Lower lobe of right lung (tissue), 2 donors: ENCODE measurements at regions of chr4 and their contacts with region 1.

Region 1: DNA sequence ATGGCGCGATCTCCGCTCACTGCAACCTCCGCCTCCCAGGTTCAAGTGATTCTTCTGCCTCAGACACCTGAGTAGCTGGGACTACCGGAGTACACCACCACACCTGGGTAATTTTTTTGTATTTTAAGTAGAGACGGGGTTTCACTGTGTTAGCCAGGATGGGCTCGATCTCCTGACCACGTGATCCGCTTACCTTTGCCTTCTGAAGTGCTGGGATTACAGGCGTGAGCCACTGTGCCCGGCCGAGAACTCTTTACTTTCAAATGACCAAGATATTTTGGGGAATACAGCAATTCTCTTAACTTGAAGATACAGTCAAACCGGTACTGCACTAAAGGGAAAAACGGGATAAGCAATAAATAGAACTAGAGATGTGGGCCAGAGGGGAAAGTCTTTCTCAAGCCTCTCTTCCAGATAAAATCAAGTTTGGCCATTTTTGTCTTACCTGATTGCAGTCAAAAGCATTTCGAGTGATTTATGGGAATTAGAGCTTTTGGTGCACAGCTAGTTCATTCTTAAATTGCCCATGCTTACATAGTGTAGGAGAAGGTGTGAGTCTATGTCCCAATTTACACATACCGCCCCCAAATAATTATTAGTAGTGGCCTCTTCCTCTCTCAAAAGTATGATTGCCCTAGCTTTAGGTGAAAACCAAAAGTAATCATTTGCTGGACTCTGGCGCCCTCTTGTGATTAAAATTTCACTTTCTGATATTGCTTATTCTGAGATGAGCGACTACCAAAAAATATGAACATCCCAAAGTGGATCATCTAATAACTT is 53.2 kb upstream of the ABCG2 start:
- DNase-seq: no peak
- ATAC-seq: peak; percentile 41 to 79
- H3K4me3 ChIP-seq: no peak overlapping the region
- H3K27ac ChIP-seq: no peak overlapping the region
- H3K4me1 ChIP-seq: no peaks in the 10 kb centered on the region
- H3K27me3 ChIP-seq: no peaks in the 10 kb centered on the region
- CTCF ChIP-seq: peak; percentile 67

Region 2: GRCh38 chr4:88033309-88033708 is 178.4 kb before region 1 on chr4:
- intact Hi-C with region 1: loop called (anchors 10 kb)
- DNase-seq: no peak
- ATAC-seq: peak; percentile 54 to 61
- H3K4me3 ChIP-seq: no peak overlapping the region
- H3K27ac ChIP-seq: no peak overlapping the region
- H3K4me1 ChIP-seq: no peaks in the 10 kb centered on the region
- H3K27me3 ChIP-seq: no peaks in the 10 kb centered on the region
- CTCF ChIP-seq: peak; percentile 66

Region 3: DNA sequence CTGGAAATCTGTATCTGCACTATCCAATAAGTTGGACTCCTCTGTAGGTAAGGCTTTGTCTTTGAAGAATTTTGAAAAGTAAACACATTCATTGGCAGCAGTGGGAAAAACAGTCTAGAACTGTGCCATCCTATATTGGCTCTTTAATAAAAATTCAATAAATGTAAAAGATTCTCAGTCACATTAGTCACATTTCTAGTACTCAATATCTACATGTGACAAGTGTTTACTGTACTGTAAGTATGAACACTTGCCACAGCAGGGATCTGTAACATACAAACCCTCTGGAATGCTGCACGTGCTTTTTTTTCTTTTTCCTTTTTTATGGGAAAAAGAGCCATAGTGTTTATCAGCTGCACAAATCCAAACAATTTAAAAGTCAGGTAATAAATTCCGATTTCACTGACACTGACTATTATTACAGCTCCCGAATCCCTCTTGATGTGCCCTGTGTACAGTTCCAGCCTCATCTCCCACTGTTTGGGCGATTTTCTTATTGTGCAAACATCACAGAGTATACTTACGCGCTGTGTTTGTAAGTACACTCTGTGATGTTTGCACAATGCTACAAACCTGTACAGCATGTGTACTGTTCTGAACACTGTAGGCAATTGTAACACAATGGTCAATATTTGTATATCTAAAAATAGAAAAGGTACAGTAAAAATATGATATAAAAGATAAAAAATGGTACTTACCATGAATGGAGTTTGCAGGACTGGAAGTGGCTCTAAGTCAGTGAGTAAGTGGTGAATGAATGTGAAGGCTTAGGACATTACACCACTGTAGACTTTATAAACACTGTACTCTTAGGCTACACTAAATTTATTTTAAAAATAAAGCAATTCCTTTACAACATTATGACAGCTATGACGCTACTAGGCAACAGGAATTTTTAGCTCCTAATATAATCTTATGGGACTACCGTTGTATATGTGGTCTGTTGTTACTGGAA is 303.2 kb after region 1 on chr4:
- intact Hi-C with region 1: loop called (anchors 10 kb)
- DNase-seq: no peak
- ATAC-seq: peak; percentile 95
- H3K4me3 ChIP-seq: no peak overlapping the region
- H3K27ac ChIP-seq: no peak overlapping the region
- H3K4me1 ChIP-seq: peaks cover 6% of the 10 kb centered on the region
- H3K27me3 ChIP-seq: no peaks in the 10 kb centered on the region
- CTCF ChIP-seq: no peak